ENCODE measurements at regions of chr3 and their contacts with region 1.

Region 1: GRCh38 chr3:183369117-183369516 is 59.3 kb downstream of the MCF2L2 start:
- DNase-seq: peak; percentile 72 to 77 (median 73)
- H3K4me3 ChIP-seq: no peak overlapping the region
- H3K4me3 Mint-ChIP-seq: no peak overlapping the region
- H3K27ac ChIP-seq: peak overlapping the region in 1 of 2 donors; percentile 34
- H3K27ac Mint-ChIP-seq: peak overlapping the region; percentile 66 to 93 (median 87)
- H3K4me1 ChIP-seq: peaks cover 32% of the 10 kb centered on the region in 2 donors
- H3K4me1 Mint-ChIP-seq: peaks cover 36% of the 10 kb centered on the region
- H3K27me3 ChIP-seq: no peaks in the 10 kb centered on the region
- H3K27me3 Mint-ChIP-seq: peaks cover 0 to 2% (median 1%) of the 10 kb centered on the region in 3 donors
- CTCF ChIP-seq: no peak

Region 2: DNA sequence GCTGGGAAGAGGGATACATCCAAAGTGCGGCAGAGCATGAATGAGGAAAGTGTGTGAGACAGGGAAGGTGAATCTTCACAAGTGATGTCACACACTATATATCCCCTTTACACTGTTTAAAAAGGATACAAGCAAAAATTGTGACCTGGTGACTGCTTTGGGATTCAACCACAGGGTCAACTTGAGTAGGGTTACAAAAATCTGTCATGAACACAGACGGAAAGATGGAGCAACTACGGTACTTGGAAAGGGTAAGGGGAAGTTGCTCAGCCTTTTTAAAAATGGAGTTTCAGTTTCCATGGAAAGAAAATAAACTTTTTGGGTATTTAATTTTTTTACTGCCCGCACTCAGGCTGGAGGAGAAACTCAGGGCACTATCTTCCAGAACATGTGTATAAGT is 55.8 kb before region 1 on chr3:
- intact Hi-C with region 1: loop called (anchors 5 kb)
- DNase-seq: peak; percentile 71 to 80 (median 73)
- H3K4me3 ChIP-seq: peak overlapping the region in 2 of 3 experiments; percentile 17 to 33
- H3K4me3 Mint-ChIP-seq: peak overlapping the region; percentile 24 to 63
- H3K27ac ChIP-seq: peak overlapping the region; percentile 37 to 70
- H3K27ac Mint-ChIP-seq: peak overlapping the region; percentile 82 to 92 (median 87)
- H3K4me1 ChIP-seq: peaks cover 30 to 34% of the 10 kb centered on the region in 2 donors
- H3K4me1 Mint-ChIP-seq: peaks cover 36% of the 10 kb centered on the region
- H3K27me3 ChIP-seq: no peaks in the 10 kb centered on the region
- H3K27me3 Mint-ChIP-seq: peaks cover 2% of the 10 kb centered on the region in 3 donors
- CTCF ChIP-seq: no peak